Pancreas (tissue), 10 donors: ENCODE measurements at regions of chr12 and their contacts with region 1.

Region 1: GRCh38 chr12:109518820-109519665 is 41.6 kb downstream of the UBE3B start:
- DNase-seq: peak in 5 of 6 donors; percentile 27 to 74 (median 46)
- ATAC-seq: peak in 3 of 4 donors; percentile 81 to 87 (median 86)
- H3K4me3 ChIP-seq: no peak overlapping the region
- H3K27ac ChIP-seq: peak overlapping the region in 1 of 4 donors; percentile 14
- H3K4me1 ChIP-seq: no peaks in the 10 kb centered on the region
- H3K27me3 ChIP-seq: no peaks in the 10 kb centered on the region
- CTCF ChIP-seq: peak; percentile 55 to 77 (median 60)

Region 2: GRCh38 chr12:109458771-109459208 is 60.3 kb before region 1 on chr12:
- intact Hi-C with region 1: no loop called
- DNase-seq: no peak
- ATAC-seq: no peak
- H3K4me3 ChIP-seq: no peak overlapping the region
- H3K27ac ChIP-seq: peak overlapping the region in 1 of 4 donors; percentile 30
- H3K4me1 ChIP-seq: peaks cover 2 to 16% (median 13%) of the 10 kb centered on the region in 3 donors
- H3K27me3 ChIP-seq: no peaks in the 10 kb centered on the region
- CTCF ChIP-seq: no peak

Region 3: GRCh38 chr12:109563291-109564284 is 44.5 kb after region 1 on chr12:
- intact Hi-C with region 1: no loop called
- DNase-seq: no peak
- ATAC-seq: peak in 1 of 4 donors; percentile 23
- H3K4me3 ChIP-seq: no peak overlapping the region
- H3K27ac ChIP-seq: no peak overlapping the region
- H3K4me1 ChIP-seq: no peaks in the 10 kb centered on the region
- H3K27me3 ChIP-seq: no peaks in the 10 kb centered on the region
- CTCF ChIP-seq: no peak

Region 4: DNA sequence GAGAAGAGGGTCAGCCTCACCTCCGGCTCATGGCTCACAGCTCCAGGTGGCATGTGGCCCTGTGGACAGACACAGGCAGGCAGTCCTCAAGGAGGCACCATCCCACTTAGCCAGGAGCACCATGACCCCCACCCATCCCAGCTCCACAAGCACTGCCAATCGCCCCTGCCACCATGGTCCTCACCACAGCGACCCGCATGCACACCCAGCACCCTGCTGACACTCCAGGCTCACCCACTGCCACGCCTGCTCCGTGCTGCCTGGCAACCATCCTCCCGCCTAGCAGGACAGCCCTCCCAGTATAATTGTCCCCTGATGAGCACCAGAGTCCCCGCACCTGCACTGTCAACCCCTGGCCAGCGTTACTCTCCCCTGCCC is 263.3 kb after region 1 on chr12:
- intact Hi-C with region 1: loop called in 2 of 3 experiments (anchors 5 to 10 kb)
- DNase-seq: no peak
- ATAC-seq: no peak
- H3K4me3 ChIP-seq: no peak overlapping the region
- H3K27ac ChIP-seq: no peak overlapping the region
- H3K4me1 ChIP-seq: no peaks in the 10 kb centered on the region
- H3K27me3 ChIP-seq: no peaks in the 10 kb centered on the region
- CTCF ChIP-seq: no peak

Region 5: DNA sequence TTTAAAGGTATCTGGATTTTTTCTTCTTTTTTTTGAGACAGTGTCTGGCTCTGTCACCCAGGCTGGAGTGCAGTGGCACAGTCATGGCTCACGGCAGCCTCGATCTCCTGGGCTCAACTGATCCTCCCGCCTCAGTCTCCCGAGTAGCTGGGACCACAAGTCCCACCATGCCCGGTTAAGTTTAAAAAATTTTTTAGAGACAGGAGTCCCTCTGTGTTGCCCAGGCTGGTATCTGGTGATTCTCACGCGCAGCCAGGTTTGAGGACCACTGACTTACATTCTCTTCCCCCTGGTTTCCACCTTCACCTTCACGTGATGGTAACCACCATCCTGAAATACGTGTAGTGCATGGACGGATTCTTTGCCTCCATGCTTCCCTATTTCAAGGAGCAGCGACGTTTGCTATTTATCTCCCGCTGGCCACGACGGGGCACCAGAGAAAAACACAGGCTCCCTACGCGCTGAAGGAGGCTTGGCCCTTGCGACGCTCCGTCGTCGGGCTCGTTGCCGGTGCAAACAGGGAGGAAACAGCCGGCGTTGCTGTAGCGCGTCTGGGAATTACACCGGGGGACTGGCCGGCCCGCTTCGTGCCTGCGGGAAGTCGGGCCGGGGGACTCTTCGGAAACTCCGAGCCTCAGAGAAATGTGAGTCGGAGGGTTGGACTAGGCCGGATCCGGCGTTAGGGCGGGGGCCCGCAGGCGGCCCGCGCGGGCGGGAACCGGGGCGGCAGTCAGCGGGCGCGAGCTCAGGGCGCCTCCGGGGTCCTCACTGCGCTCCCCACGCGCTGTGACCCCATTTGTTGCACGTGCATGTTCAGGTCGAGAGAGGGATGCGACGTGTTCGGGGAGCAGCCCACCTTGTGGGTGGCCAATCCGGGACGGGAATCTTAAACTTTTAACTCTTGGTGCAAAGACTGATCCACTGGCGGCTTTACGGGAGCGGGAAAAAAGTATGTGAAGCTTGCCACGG is 381.0 kb after region 1 on chr12 and contains the start of gene TCHP:
- intact Hi-C with region 1: no loop called
- DNase-seq: peak; percentile 82 to 95 (median 88)
- ATAC-seq: peak; percentile 97 to 99 (median 98)
- H3K4me3 ChIP-seq: peak within 1 kb of the TSS; percentile 79 to 96 (median 91)
- H3K27ac ChIP-seq: peak within 1 kb of the TSS; percentile 45 to 73 (median 67)
- H3K4me1 ChIP-seq: peaks cover 0 to 12% (median 6%) of the 10 kb centered on the region in 3 donors
- H3K27me3 ChIP-seq: no peaks in the 10 kb centered on the region
- CTCF ChIP-seq: peak in 1 of 4 donors; percentile 2
- total RNA-seq, gene TCHP: 8.4 to 11.9 (median 10.2) TPM